Left cardiac atrium (tissue), 4 donors: ENCODE measurements at regions of chr7 and their contacts with region 1.

Region 1: GRCh38 chr7:86667732-86668131 is 24.0 kb downstream of the GRM3 start:
- DNase-seq: no peak
- ATAC-seq: no peak

Region 2: DNA sequence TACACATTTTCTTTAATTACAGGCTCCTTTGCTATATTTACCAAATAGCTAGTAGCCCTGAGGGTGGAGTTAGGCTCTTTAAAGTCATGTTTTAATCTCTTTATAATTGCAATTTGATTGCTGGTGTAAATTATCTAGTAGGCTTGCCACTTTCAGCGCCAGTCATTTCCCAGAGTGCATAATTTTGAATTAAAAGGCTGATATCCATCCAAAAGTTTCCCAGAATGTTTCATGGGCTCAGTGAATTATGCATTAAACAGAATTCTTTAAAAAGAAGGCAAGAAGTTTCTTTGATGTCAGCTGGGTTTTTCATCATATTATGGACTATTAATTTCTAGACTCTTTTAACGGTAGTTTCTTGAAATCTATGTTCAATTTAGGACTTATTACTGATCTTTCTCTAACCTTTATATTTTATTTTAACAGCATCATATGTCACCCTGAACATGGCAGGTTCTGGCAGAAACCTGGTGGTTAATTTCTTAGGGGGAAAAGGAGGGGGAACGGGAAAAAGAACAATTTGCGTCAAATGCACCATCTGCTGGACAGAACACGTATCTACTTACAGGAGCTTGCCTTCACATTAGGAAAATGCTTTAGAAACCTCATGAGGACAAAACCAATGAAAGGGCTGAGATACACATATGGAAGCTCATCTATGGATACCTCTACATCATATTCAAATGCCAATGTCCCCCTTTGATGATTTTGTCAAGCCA is 147.1 kb after region 1 on chr7:
- intact Hi-C with region 1: loop called (anchors 5 kb)
- DNase-seq: no peak
- ATAC-seq: no peak